Naive thymus-derived CD4-positive, alpha-beta T cell (primary cell): ENCODE measurements at regions of chr17 and their contacts with region 1.

Region 1: GRCh38 chr17:74961657-74962490 is 10.7 kb downstream of the HID1 start:
- DNase-seq: peak; percentile 69 to 88 (median 78)
- ATAC-seq: peak; percentile 80
- H3K4me3 ChIP-seq: no peak overlapping the region
- H3K4me3 Mint-ChIP-seq: peak overlapping the region in 2 of 10 donors; percentile 14 to 33
- H3K27ac ChIP-seq: no peak overlapping the region
- H3K27ac Mint-ChIP-seq: no peak overlapping the region
- H3K4me1 ChIP-seq: peaks cover 0 to 4% of the 10 kb centered on the region in 2 donors
- H3K4me1 Mint-ChIP-seq: peaks cover 0 to 8% (median 5%) of the 10 kb centered on the region in 7 donors
- H3K27me3 ChIP-seq: no peaks in the 10 kb centered on the region
- H3K27me3 Mint-ChIP-seq: peaks cover 0 to 3% (median 0%) of the 10 kb centered on the region in 5 donors

Region 2: GRCh38 chr17:74734256-74734655 is 227.6 kb before region 1 on chr17:
- CTCF ChIA-PET with region 1: no interaction called
- POLR2A ChIA-PET with region 1: no interaction called
- intact Hi-C with region 1: no loop called
- DNase-seq: no peak
- ATAC-seq: no peak
- H3K4me3 ChIP-seq: no peak overlapping the region
- H3K4me3 Mint-ChIP-seq: peak overlapping the region in 1 of 10 donors; percentile 57
- H3K27ac ChIP-seq: no peak overlapping the region
- H3K27ac Mint-ChIP-seq: peak overlapping the region in 5 of 9 donors; percentile 19 to 76 (median 59)
- H3K4me1 ChIP-seq: peaks cover 16 to 37% of the 10 kb centered on the region in 2 donors
- H3K4me1 Mint-ChIP-seq: peaks cover 23 to 45% (median 30%) of the 10 kb centered on the region in 7 donors
- H3K27me3 ChIP-seq: no peaks in the 10 kb centered on the region
- H3K27me3 Mint-ChIP-seq: peaks cover 0 to 17% (median 0%) of the 10 kb centered on the region in 5 donors

Region 3: GRCh38 chr17:74748529-74749365 is 213.1 kb before region 1 on chr17 and contains the start of gene NHERF1:
- CTCF ChIA-PET with region 1: no interaction called
- POLR2A ChIA-PET with region 1: no interaction called
- intact Hi-C with region 1: loop called in 1 of 2 experiments (anchors 5 kb)
- DNase-seq: peak; percentile 45 to 98 (median 91)
- ATAC-seq: peak; percentile 95
- H3K4me3 ChIP-seq: peak within 1 kb of the TSS; percentile 95
- H3K4me3 Mint-ChIP-seq: peak within 1 kb of the TSS; percentile 96 to 100 (median 98)
- H3K27ac ChIP-seq: peak within 1 kb of the TSS; percentile 90
- H3K27ac Mint-ChIP-seq: peak within 1 kb of the TSS; percentile 80 to 97 (median 93)
- H3K4me1 ChIP-seq: peaks cover 54 to 59% of the 10 kb centered on the region in 2 donors
- H3K4me1 Mint-ChIP-seq: peaks cover 54 to 68% (median 62%) of the 10 kb centered on the region in 7 donors
- H3K27me3 ChIP-seq: no peaks in the 10 kb centered on the region
- H3K27me3 Mint-ChIP-seq: no peaks in the 10 kb centered on the region
- total RNA-seq, gene NHERF1: 93.1 to 279 (median 156) TPM

Region 4: DNA sequence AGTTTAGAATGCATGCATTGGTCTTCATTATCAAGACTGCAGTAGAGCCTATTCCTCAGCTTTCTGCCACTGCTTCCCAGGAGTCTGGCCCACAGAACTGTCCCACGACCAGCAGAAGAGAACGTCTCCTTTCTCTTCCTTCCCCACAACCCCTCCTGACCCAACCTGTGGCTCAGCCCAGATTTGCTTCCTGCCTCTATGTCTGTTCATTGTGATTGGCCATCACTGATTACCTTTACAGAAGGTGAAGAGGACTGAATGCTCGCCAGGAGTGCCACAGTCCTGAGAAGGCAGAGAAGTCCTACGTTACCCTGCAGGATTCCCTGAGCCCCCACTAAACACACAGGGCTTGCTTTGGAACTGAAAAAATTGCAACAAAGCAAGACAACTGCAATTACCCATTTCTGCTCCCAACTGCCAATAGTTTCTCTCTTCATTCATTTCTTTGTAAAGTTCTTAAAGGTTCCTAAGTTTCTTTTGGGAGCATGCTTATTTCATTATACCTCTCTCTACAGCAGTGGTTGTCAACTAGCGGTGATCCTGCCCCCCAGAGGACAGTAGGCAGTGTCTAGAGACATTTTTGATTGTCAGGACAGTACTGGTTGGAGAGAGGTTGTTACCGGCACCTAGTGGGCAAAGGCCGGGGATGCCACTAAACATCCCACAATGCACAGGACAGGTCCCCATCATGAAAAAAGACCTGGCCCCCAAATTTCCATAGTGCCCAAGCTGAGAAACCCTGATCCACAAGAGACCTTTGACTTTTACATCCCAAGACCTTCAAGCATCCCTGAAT is 181.2 kb before region 1 on chr17:
- CTCF ChIA-PET with region 1: no interaction called
- POLR2A ChIA-PET with region 1: no interaction called
- intact Hi-C with region 1: no loop called
- DNase-seq: peak in 1 of 9 donors; percentile 28
- ATAC-seq: peak; percentile 25
- H3K4me3 ChIP-seq: peak overlapping the region; percentile 27
- H3K4me3 Mint-ChIP-seq: peak overlapping the region; percentile 16 to 86 (median 76)
- H3K27ac ChIP-seq: peak overlapping the region; percentile 57
- H3K27ac Mint-ChIP-seq: peak overlapping the region; percentile 91 to 99 (median 93)
- H3K4me1 ChIP-seq: peaks cover 48 to 62% of the 10 kb centered on the region in 2 donors
- H3K4me1 Mint-ChIP-seq: peaks cover 63 to 86% (median 83%) of the 10 kb centered on the region in 7 donors
- H3K27me3 ChIP-seq: no peaks in the 10 kb centered on the region
- H3K27me3 Mint-ChIP-seq: no peaks in the 10 kb centered on the region

Region 5: GRCh38 chr17:74945543-74945942 is 16.3 kb before region 1 on chr17:
- CTCF ChIA-PET with region 1: no interaction called
- POLR2A ChIA-PET with region 1: no interaction called
- intact Hi-C with region 1: no loop called
- DNase-seq: no peak
- ATAC-seq: no peak
- H3K4me3 ChIP-seq: no peak overlapping the region
- H3K4me3 Mint-ChIP-seq: no peak overlapping the region
- H3K27ac ChIP-seq: no peak overlapping the region
- H3K27ac Mint-ChIP-seq: no peak overlapping the region
- H3K4me1 ChIP-seq: no peaks in the 10 kb centered on the region
- H3K4me1 Mint-ChIP-seq: no peaks in the 10 kb centered on the region
- H3K27me3 ChIP-seq: no peaks in the 10 kb centered on the region
- H3K27me3 Mint-ChIP-seq: peaks cover 4 to 20% (median 10%) of the 10 kb centered on the region in 5 donors

Region 6: DNA sequence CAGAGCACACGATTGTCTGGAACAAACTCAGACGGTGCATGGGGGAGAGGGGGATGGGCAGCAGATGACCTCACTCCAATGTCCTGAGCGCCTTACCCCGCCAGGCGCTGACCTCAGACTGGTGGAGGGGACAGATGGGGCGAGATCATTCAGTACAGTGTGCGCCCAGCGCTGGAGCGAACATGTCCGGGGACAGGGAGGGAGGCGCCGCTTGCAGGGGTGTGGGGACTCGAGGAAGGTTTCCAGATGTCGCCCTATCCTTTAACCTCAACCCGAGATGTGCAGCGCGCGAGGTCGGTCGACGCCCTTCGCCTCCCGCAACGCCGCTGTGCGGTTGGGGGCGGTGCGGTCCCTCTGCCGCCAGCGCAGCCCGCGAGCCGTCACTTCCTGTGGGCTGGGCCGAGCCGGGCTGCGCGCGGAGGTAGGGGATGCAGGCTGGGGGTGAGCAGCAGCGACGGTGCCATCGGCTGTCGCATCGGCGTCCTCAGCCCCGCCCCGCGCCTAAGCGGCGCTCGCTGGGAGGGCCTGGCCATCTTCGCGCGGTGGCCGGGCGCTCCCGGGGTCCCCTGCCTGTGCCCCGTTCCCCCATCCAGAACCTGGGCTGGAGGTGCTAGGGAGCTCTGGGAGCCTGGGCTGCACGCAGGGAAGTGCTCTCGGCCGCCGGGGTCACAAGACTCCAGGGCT is 20.2 kb after region 1 on chr17:
- CTCF ChIA-PET with region 1: interaction called, 15 read pairs
- POLR2A ChIA-PET with region 1: interaction called, 3 read pairs
- intact Hi-C with region 1: loop called (anchors 1 to 2 kb)
- DNase-seq: peak; percentile 67 to 85 (median 83)
- ATAC-seq: peak; percentile 97
- H3K4me3 ChIP-seq: peak overlapping the region; percentile 77
- H3K4me3 Mint-ChIP-seq: peak overlapping the region; percentile 85 to 95 (median 92)
- H3K27ac ChIP-seq: peak overlapping the region; percentile 65
- H3K27ac Mint-ChIP-seq: peak overlapping the region; percentile 64 to 96 (median 87)
- H3K4me1 ChIP-seq: peaks cover 18 to 20% of the 10 kb centered on the region in 2 donors
- H3K4me1 Mint-ChIP-seq: peaks cover 3 to 27% (median 23%) of the 10 kb centered on the region in 7 donors
- H3K27me3 ChIP-seq: no peaks in the 10 kb centered on the region
- H3K27me3 Mint-ChIP-seq: peaks cover 0 to 57% (median 0%) of the 10 kb centered on the region in 5 donors

Region 7: DNA sequence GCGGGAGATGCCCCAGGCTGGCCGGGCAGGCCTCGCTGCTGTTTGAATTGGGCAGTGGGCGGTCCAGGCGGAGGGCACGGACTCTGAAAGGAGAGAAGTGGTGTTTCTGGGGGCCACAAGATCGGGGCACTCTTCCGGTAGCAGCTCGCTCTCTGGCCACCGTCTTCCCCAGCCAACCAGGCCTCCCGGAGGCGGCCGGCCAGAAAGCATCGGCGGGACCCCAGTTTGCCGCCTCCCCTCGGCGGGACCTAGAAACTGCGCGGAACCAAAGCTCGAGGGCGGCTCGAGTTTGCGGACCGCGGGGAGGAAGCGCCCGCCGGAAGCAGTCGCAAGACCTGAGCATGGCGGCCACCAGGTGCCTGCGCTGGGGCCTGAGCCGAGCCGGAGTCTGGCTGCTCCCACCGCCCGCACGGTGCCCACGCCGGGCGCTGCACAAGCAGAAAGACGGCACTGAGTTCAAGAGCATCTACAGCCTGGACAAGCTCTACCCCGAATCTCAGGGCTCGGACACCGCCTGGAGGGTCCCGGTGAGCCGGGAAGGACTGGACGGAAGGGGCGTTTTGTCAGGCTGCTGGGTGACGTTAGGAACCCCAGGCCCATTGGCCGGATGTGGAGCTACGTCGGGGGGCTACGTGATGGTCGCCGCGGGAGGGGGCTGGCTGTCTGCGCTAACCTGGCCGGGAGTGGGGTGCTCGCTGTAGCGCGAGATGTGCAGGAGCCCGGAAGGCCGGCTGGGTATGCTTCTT is 50.6 kb after region 1 on chr17 and contains the start of gene MRPL58:
- CTCF ChIA-PET with region 1: interaction called, 42 read pairs
- POLR2A ChIA-PET with region 1: interaction called, 9 read pairs
- intact Hi-C with region 1: loop called in 1 of 2 experiments (anchors 1 kb)
- DNase-seq: peak; percentile 66 to 81 (median 75)
- ATAC-seq: peak; percentile 97
- H3K4me3 ChIP-seq: peak within 1 kb of the TSS; percentile 69
- H3K4me3 Mint-ChIP-seq: peak within 1 kb of the TSS; percentile 76 to 98 (median 94)
- H3K27ac ChIP-seq: peak within 1 kb of the TSS; percentile 83
- H3K27ac Mint-ChIP-seq: peak within 1 kb of the TSS; percentile 5 to 97 (median 92)
- H3K4me1 ChIP-seq: peaks cover 9 to 14% of the 10 kb centered on the region in 2 donors
- H3K4me1 Mint-ChIP-seq: peaks cover 25 to 38% (median 35%) of the 10 kb centered on the region in 7 donors
- H3K27me3 ChIP-seq: no peaks in the 10 kb centered on the region
- H3K27me3 Mint-ChIP-seq: peaks cover 0 to 4% (median 0%) of the 10 kb centered on the region in 5 donors
- total RNA-seq, gene MRPL58: 11.7 to 46.1 (median 23.0) TPM

Region 8: GRCh38 chr17:75131280-75132017 is 169.6 kb after region 1 on chr17 and contains the start of gene NT5C:
- CTCF ChIA-PET with region 1: interaction called, 5 read pairs
- POLR2A ChIA-PET with region 1: no interaction called
- intact Hi-C with region 1: loop called in 1 of 2 experiments (anchors 1 kb)
- DNase-seq: peak; percentile 32 to 82 (median 50)
- ATAC-seq: peak; percentile 85
- H3K4me3 ChIP-seq: peak within 1 kb of the TSS; percentile 71
- H3K4me3 Mint-ChIP-seq: peak within 1 kb of the TSS; percentile 79 to 93 (median 88)
- H3K27ac ChIP-seq: peak within 1 kb of the TSS; percentile 84
- H3K27ac Mint-ChIP-seq: peak within 1 kb of the TSS; percentile 76 to 93 (median 88)
- H3K4me1 ChIP-seq: peaks cover 5 to 7% of the 10 kb centered on the region in 2 donors
- H3K4me1 Mint-ChIP-seq: peaks cover 7 to 23% (median 10%) of the 10 kb centered on the region in 7 donors
- H3K27me3 ChIP-seq: no peaks in the 10 kb centered on the region
- H3K27me3 Mint-ChIP-seq: no peaks in the 10 kb centered on the region
- total RNA-seq, gene NT5C: 23.4 to 54.8 (median 37.5) TPM

Region 9: GRCh38 chr17:75205037-75205792 is 243.3 kb after region 1 on chr17 and contains the start of gene NUP85:
- CTCF ChIA-PET with region 1: interaction called, 53 read pairs
- POLR2A ChIA-PET with region 1: interaction called, 3 read pairs
- intact Hi-C with region 1: loop called (anchors 1 kb)
- DNase-seq: peak; percentile 87 to 97 (median 93)
- ATAC-seq: peak; percentile 96
- H3K4me3 ChIP-seq: peak within 1 kb of the TSS; percentile 82
- H3K4me3 Mint-ChIP-seq: peak within 1 kb of the TSS; percentile 91 to 98 (median 96)
- H3K27ac ChIP-seq: peak within 1 kb of the TSS; percentile 95
- H3K27ac Mint-ChIP-seq: peak within 1 kb of the TSS; percentile 94 to 100 (median 99)
- H3K4me1 ChIP-seq: peaks cover 0 to 5% of the 10 kb centered on the region in 2 donors
- H3K4me1 Mint-ChIP-seq: peaks cover 12 to 47% (median 26%) of the 10 kb centered on the region in 7 donors
- H3K27me3 ChIP-seq: no peaks in the 10 kb centered on the region
- H3K27me3 Mint-ChIP-seq: no peaks in the 10 kb centered on the region
- total RNA-seq, gene NUP85: 96.3 to 143 (median 99.2) TPM